ENCODE measurements at regions of chr4 and their contacts with region 1.

Region 1: GRCh38 chr4:94472056-94472824 is 20.5 kb downstream of the PDLIM5 start:
- DNase-seq: no peak
- ATAC-seq: peak; percentile 17 to 64 (median 34)
- H3K4me3 ChIP-seq: no peak overlapping the region
- H3K27ac ChIP-seq: peak overlapping the region; percentile 59 to 87 (median 70)
- H3K4me1 ChIP-seq: peaks cover 16 to 55% (median 53%) of the 10 kb centered on the region in 3 donors
- H3K27me3 ChIP-seq: no peaks in the 10 kb centered on the region
- CTCF ChIP-seq: no peak

Region 2: DNA sequence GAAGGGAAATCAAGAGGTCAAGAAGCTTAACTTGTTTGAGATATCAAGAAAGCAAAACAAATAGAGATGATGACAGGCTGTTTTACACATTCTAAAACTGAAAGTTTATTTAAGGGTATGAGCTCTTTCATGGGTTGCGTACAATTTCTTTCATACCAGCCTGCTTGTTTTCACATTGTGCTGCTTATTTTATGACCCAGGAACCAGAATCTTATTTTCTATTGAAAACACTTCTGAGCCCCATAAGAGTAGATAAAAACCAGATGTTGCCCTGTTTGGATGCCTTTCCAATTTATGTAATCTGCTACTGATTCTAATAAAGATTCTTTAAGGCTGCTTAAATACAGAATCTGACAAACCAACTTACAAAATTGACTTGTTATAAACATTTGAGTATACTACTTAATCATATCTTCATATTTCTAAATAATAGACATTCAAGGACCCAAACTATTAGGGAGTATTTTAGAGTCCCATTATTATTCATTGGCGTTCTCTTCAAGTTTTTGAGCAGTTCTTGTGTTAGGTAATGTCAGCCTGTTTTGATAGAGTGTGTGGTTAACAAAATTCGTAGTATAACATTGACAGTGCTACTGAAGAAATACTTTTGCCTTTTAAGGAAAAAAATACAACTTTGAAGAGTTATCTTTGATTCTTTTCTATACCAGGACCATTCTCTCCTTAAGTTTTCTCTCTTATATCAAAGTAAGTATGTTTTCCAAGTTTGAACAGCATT is 53.9 kb after region 1 on chr4:
- intact Hi-C with region 1: loop called in 1 of 3 experiments (anchors 10 kb)
- DNase-seq: no peak
- ATAC-seq: peak; percentile 35 to 75 (median 62)
- H3K4me3 ChIP-seq: no peak overlapping the region
- H3K27ac ChIP-seq: peak overlapping the region in 2 of 4 donors; percentile 24 to 62
- H3K4me1 ChIP-seq: peaks cover 11 to 53% (median 35%) of the 10 kb centered on the region in 3 donors
- H3K27me3 ChIP-seq: no peaks in the 10 kb centered on the region
- CTCF ChIP-seq: no peak